Heart left ventricle (tissue), 16 donors: ENCODE measurements at regions of chr4 and their contacts with region 1.

Region 1: GRCh38 chr4:30744957-30745640 is 24.9 kb downstream of the PCDH7 start:
- DNase-seq: no peak
- ATAC-seq: peak; percentile 76 to 92 (median 89)
- H3K4me3 ChIP-seq: no peak overlapping the region
- H3K27ac ChIP-seq: peak overlapping the region in 5 of 12 donors; percentile 8 to 62 (median 28)
- H3K4me1 ChIP-seq: peaks cover 0 to 27% (median 6%) of the 10 kb centered on the region in 12 donors
- H3K27me3 ChIP-seq: no peaks in the 10 kb centered on the region
- CTCF ChIP-seq: no peak
- POLR2A ChIP-seq: no peak

Region 2: GRCh38 chr4:30948653-30949052 is 203.6 kb after region 1 on chr4:
- intact Hi-C with region 1: loop called in 1 of 10 experiments (anchors 10 kb)
- DNase-seq: no peak
- ATAC-seq: peak in 3 of 4 donors; percentile 36 to 82 (median 70)
- H3K4me3 ChIP-seq: no peak overlapping the region
- H3K27ac ChIP-seq: no peak overlapping the region
- H3K4me1 ChIP-seq: peaks cover 0 to 5% (median 0%) of the 10 kb centered on the region in 12 donors
- H3K27me3 ChIP-seq: no peaks in the 10 kb centered on the region
- CTCF ChIP-seq: no peak
- POLR2A ChIP-seq: no peak